Activated T-helper 1 cell treated with anti-CD3 and anti-CD28 coated beads, Interleukin-12 subunit alpha, Interleukin-12 subunit beta, Interleukin-2, Interleukin-4 antibody, amounts not matched to agents 30 ng/mL and 10 ng/mL and 1 ng/mL, durations not matched to agents 14 hours and 24 hours and 36 hours (primary cell): ENCODE measurements at regions of chr6 and their contacts with region 1.

Region 1: GRCh38 chr6:30717042-30717844 is at the start of gene MDC1:
- DNase-seq: peak; percentile 99
- H3K4me3 Mint-ChIP-seq: peak within 1 kb of the TSS; percentile 91
- H3K27ac Mint-ChIP-seq: peak within 1 kb of the TSS; percentile 99
- H3K4me1 Mint-ChIP-seq: peaks cover 51% of the 10 kb centered on the region
- H3K27me3 Mint-ChIP-seq: no peaks in the 10 kb centered on the region
- total RNA-seq, gene MDC1: 93.7 and 95.7 TPM in 2 replicates

Region 2: DNA sequence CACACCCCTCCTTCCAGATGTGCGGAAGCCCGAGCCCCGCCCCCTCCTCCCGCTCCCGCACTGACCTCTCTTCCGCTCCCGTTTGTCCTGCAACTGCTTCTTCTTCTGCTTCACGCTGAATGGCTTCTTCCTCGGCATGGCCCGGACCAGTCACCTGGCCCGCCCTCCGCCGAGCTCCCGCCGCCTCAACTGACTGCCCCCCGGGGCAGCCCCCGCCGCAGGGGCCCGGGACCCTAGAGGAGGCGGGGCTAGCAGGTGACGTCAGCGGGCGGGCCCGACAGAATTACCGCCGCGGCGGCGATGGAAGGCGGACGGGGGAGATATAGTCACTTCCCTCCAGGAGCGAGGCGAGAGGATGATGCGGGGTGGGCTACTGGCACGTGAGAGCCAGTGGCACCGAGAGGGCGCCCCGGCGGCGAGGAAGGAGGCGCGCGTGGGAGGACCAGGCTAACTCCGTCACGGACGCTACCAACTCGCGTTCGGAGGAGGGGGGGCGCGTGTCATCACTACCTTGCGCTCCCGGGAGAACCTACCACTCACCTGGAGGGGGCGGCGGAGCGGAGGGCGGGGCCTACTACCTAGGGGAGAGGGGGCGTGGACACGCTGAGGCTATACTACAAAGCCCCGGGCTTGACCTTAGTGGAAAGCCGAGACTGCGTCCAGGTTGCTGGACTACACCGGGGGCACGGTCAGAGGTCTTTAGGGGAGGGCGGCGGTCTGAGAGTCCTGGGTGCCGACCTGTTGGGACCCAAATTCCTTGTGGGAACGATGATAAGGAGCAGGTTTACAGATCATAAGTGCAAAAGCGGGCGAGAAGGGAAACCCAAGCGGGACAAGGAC is 161.0 kb before region 1 on chr6 and contains the start of gene GNL1:
- intact Hi-C with region 1: loop called (anchors 1 kb)
- DNase-seq: peak; percentile 96
- H3K4me3 Mint-ChIP-seq: peak within 1 kb of the TSS; percentile 96
- H3K27ac Mint-ChIP-seq: peak within 1 kb of the TSS; percentile 99
- H3K4me1 Mint-ChIP-seq: peaks cover 36% of the 10 kb centered on the region
- H3K27me3 Mint-ChIP-seq: no peaks in the 10 kb centered on the region
- total RNA-seq, gene GNL1: 86.3 and 92.4 TPM in 2 replicates

Region 3: GRCh38 chr6:30646458-30647241 is 70.6 kb before region 1 on chr6 and contains the start of gene C6orf136:
- intact Hi-C with region 1: loop called (anchors 1 kb)
- DNase-seq: peak; percentile 89
- H3K4me3 Mint-ChIP-seq: peak within 1 kb of the TSS; percentile 90
- H3K27ac Mint-ChIP-seq: peak within 1 kb of the TSS; percentile 91
- H3K4me1 Mint-ChIP-seq: peaks cover 23% of the 10 kb centered on the region
- H3K27me3 Mint-ChIP-seq: no peaks in the 10 kb centered on the region
- total RNA-seq, gene C6orf136: 23.9 and 36.0 TPM in 2 replicates

Region 4: DNA sequence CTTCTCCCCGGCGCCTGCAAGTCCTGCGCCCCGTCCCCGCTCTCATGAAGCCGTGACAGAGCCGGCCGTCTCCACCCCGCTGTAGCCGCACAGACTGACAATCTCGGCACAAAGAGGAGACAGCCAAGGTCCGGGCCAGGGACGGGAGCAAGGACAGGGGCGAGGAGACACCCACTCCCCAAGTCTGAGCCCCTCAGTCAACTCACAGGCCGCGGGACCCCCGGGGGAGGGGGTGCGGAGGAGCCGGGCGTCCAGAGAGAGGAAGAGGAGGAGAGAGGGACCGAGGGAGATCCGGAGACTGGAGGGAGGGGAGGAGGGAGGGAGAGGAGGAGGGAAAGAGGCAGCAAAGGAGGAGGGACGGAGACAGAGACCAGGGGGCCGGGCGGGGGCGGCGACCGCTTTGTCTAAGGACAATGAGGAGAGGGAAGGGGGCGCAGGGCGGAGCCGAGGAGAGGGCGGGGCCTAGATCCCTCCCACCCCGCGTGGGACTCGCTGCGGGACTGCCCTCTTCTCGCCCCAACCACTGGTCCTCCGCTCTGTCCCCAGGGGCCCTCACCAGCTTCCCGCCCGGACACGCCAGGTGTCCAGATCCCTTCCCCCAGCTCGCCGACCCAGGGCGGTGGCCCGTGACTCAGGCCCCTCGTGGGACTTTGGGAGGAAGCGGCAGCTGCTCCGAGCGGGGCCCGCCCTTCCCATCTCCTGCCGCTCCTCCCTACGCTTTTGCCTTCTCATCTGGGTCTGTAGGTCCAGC is 30.2 kb before region 1 on chr6:
- intact Hi-C with region 1: loop called (anchors 1 kb)
- DNase-seq: peak; percentile 83
- H3K4me3 Mint-ChIP-seq: peak overlapping the region; percentile 94
- H3K27ac Mint-ChIP-seq: peak overlapping the region; percentile 87
- H3K4me1 Mint-ChIP-seq: peaks cover 50% of the 10 kb centered on the region
- H3K27me3 Mint-ChIP-seq: no peaks in the 10 kb centered on the region

Region 5: DNA sequence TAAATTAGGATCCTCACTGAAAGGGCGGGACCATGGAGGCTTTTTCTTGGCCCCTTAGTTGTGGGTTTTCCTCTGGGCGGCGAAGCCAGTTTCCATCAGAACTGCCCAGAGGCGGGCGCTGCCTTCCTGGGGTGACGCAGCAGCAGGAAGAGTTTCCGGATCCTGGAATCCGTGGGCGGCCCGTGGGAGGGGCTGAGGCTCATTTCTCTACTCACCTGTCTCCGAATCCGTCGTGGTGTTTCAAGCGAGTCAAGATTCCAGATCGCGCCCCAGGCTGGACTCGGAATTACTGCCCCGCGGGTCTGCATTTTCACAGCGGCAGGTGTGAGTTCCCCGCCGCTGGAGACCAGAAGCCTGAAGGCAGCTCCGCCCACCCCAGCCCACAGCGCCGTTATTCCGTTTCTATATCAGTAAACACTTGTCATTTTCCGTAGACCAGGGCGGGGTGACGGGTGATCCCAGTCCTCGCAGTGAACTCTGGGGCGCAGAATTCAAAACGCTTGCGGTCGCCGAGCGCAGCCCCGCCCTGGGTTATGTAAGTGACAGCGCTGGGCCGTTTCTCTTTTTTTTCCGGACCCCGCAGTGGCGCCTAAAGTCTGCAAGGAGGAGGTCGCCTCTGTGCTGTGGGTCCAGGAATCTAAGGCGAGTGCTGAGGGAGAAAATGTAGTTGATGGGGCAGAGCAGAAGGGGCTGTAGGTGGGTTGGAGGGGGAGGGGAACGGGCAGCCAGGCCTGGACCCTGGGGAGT is 480.5 kb after region 1 on chr6:
- intact Hi-C with region 1: loop called (anchors 10 kb)
- DNase-seq: peak; percentile 92
- H3K4me3 Mint-ChIP-seq: peak overlapping the region; percentile 98
- H3K27ac Mint-ChIP-seq: peak overlapping the region; percentile 99
- H3K4me1 Mint-ChIP-seq: peaks cover 53% of the 10 kb centered on the region
- H3K27me3 Mint-ChIP-seq: no peaks in the 10 kb centered on the region